IMR-90 (cell line): ENCODE measurements at regions of chr2 and their contacts with region 1.

Region 1: DNA sequence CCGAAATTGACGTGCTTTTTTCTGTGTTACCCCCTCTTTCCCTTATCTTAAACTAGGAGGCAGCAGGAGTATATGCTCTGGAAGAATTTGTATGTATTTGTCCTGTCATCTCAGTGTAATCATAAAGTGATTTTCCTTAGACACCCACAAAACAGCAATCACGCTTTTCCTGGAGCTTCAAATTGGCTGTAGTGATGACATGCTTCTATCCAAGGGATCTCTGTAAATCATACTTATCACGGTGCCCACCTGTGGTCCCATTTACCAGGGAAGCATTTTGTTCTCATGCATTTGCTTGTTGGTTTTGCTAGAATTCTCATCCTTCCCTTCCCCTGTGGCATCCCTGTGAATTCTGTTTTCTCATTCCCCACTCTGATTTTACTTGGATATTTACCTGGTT is 220.8 kb upstream of the THUMPD2 start:
- DNase-seq: peak; percentile 22
- ATAC-seq: no peak
- H3K4me3 ChIP-seq: no peak overlapping the region
- H3K27ac ChIP-seq: no peak overlapping the region
- H3K4me1 ChIP-seq: peaks cover 2% of the 10 kb centered on the region; the same call in 1 of the 2 replicates
- H3K27me3 ChIP-seq: no peaks in the 10 kb centered on the region
- CTCF ChIP-seq: no peak
- POLR2A ChIP-seq: no peak
- RAD21 ChIP-seq: no peak

Region 2: DNA sequence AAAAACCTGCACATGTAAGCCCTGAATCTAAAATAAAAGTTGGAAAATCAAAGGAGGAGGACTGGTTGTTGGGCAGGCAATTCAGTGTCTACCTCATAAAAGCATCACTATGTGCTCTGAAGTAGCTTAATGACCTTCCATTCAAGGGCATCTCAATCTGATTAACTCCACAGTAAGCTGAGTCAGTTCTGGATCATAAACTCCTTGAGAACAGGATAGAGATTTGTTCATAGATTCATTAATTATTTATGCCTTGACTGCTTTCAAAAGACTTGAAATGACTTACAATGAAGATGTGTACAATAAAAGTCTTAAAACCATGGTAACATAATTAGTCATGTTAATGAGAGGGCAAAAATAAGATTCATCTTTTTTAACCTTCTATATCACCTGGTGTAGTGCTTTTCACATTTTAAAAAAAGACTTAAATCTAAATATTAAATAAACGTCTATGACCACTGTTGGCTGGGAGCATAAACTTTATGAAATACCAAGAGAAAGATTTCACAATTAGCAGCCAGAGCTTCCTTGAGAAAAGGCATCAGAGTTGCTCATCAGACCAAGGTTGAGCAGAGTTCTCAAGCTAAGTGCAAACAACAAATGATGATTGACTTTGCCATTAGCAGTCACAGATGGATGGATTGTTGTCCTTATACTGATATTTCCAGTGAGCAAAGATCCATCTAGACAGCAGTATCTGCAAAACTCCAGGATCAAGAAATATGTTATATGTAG is 16.5 kb after region 1 on chr2:
- CTCF ChIA-PET with region 1: no interaction called
- POLR2A ChIA-PET with region 1: no interaction called
- dilution Hi-C with region 1: no loop called
- in situ Hi-C with region 1: no loop called
- intact Hi-C with region 1: loop called (anchors 2 kb)
- DNase-seq: peak; percentile 81
- ATAC-seq: peak; percentile 85
- H3K4me3 ChIP-seq: no peak overlapping the region
- H3K27ac ChIP-seq: peak overlapping the region; percentile 25; the same call in 1 of the 2 replicates
- H3K4me1 ChIP-seq: 0 out of 2 replicates have a peak, but pooled peaks cover 2% of the 10 kb centered on the region
- H3K27me3 ChIP-seq: no peaks in the 10 kb centered on the region
- CTCF ChIP-seq: no peak
- POLR2A ChIP-seq: no peak
- RAD21 ChIP-seq: no peak